K562 (cell line): ENCODE measurements at regions of chr2 and their contacts with region 1.

Region 1: GRCh38 chr2:135893374-135893794 is 17.1 kb upstream of the MCM6 start:
- DNase-seq: peak in 2 of 4 experiments; percentile 17 to 33
- ATAC-seq: peak; percentile 73
- H3K4me3 ChIP-seq: no peak overlapping the region
- H3K27ac ChIP-seq: no peak overlapping the region
- H3K4me1 ChIP-seq: peaks cover 0 to 7% of the 10 kb centered on the region in 2 experiments; a peak in 2 of 5 replicates
- H3K27me3 ChIP-seq: no peaks in the 10 kb centered on the region
- CTCF ChIP-seq: peak in 2 of 3 experiments; percentile 16 to 49; a peak in 2 of 6 replicates
- EP300 ChIP-seq: peak; percentile 34; the same call in 1 of the 2 replicates
- POLR2A ChIP-seq: no peak
- RAD21 ChIP-seq: peak in 1 of 2 experiments; percentile 18; a peak in 1 of 4 replicates

Region 2: GRCh38 chr2:134976074-134976702 is 917.2 kb before region 1 on chr2:
- CTCF ChIA-PET with region 1: interaction called, 11 read pairs
- POLR2A ChIA-PET with region 1: no interaction called
- in situ Hi-C with region 1: no loop called
- intact Hi-C with region 1: no loop called
- DNase-seq: no peak
- ATAC-seq: peak; percentile 51
- H3K4me3 ChIP-seq: no peak overlapping the region
- H3K27ac ChIP-seq: no peak overlapping the region
- H3K4me1 ChIP-seq: peaks cover 0 to 5% of the 10 kb centered on the region in 2 experiments; a peak in 1 of 5 replicates
- H3K27me3 ChIP-seq: peaks cover 2 to 20% of the 10 kb centered on the region in 2 experiments; a peak in 3 of 5 replicates
- CTCF ChIP-seq: no peak
- EP300 ChIP-seq: no peak
- POLR2A ChIP-seq: no peak
- RAD21 ChIP-seq: no peak

Region 3: GRCh38 chr2:135870571-135870970 is 22.8 kb before region 1 on chr2:
- CTCF ChIA-PET with region 1: no interaction called
- POLR2A ChIA-PET with region 1: interaction called, 5 read pairs
- in situ Hi-C with region 1: no loop called
- intact Hi-C with region 1: loop called (anchors 1 kb)
- DNase-seq: no peak
- ATAC-seq: no peak
- H3K4me3 ChIP-seq: no peak overlapping the region
- H3K27ac ChIP-seq: no peak overlapping the region
- H3K4me1 ChIP-seq: peaks cover 2 to 12% of the 10 kb centered on the region in 2 experiments; a peak in 4 of 5 replicates
- H3K27me3 ChIP-seq: no peaks in the 10 kb centered on the region
- CTCF ChIP-seq: no peak
- EP300 ChIP-seq: no peak
- POLR2A ChIP-seq: 0 out of 2 replicates have a peak, but pooled peaks have one; percentile 16
- RAD21 ChIP-seq: no peak

Region 4: DNA sequence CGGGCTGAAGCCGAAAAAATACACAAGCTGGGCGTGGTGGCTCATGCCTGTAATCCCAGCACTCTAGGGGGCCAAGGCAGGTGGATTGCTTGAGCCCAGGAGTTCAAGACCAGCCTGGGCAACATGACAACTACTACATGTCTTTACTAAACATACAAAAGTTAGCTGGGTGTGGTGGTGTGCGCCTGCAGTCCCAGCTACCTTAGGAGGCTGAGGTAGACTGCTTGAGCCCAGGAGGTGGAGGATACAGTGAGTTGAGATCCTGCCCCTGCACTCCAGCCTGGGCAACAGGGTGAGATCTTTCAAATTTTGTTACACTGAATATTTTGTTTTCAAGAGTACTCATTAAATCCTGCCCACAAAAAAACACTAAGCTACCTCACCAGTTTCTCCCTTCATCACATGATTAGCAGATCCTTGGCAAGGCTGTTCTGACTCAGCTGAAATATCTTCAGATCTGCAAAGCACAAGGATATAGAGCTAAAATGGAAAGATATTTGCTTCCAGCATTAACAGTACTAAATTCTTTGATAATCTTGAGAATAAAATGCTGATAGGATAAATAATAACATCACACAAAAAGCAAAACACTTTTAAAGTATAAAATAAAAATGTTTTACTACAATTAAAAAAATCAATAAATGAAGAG is 11.1 kb after region 1 on chr2:
- CTCF ChIA-PET with region 1: no interaction called
- POLR2A ChIA-PET with region 1: interaction called, 17 read pairs
- in situ Hi-C with region 1: no loop called
- intact Hi-C with region 1: no loop called
- DNase-seq: peak in 1 of 4 experiments; percentile 21
- ATAC-seq: peak; percentile 63
- H3K4me3 ChIP-seq: no peak overlapping the region
- H3K27ac ChIP-seq: no peak overlapping the region
- H3K4me1 ChIP-seq: peaks cover 0 to 9% of the 10 kb centered on the region in 2 experiments; a peak in 3 of 5 replicates
- H3K27me3 ChIP-seq: no peaks in the 10 kb centered on the region
- CTCF ChIP-seq: no peak
- EP300 ChIP-seq: no peak
- POLR2A ChIP-seq: no peak
- RAD21 ChIP-seq: no peak